ENCODE measurements at regions of chr12 and their contacts with region 1.

Region 1: GRCh38 chr12:92987362-92987761 is 58.3 kb upstream of the EEA1 start:
- DNase-seq: peak in 1 of 2 donors; percentile 87
- H3K4me3 ChIP-seq: no peak overlapping the region
- H3K27ac ChIP-seq: peak overlapping the region in 3 of 5 donors; percentile 58 to 75 (median 67)
- H3K4me1 ChIP-seq: peaks cover 5 to 25% (median 16%) of the 10 kb centered on the region in 4 donors
- H3K27me3 ChIP-seq: no peaks in the 10 kb centered on the region
- CTCF ChIP-seq: peak in 5 of 7 experiments; percentile 31 to 74 (median 60)
- EP300 ChIP-seq: no peak
- POLR2A ChIP-seq: no peak

Region 2: GRCh38 chr12:93390549-93391297 is 403.4 kb after region 1 on chr12:
- intact Hi-C with region 1: loop called (anchors 10 kb)
- DNase-seq: no peak
- H3K4me3 ChIP-seq: no peak overlapping the region
- H3K27ac ChIP-seq: peak overlapping the region in 3 of 5 donors; percentile 1 to 54 (median 32)
- H3K4me1 ChIP-seq: peaks cover 0 to 76% (median 45%) of the 10 kb centered on the region in 4 donors
- H3K27me3 ChIP-seq: no peaks in the 10 kb centered on the region
- CTCF ChIP-seq: no peak
- EP300 ChIP-seq: no peak
- POLR2A ChIP-seq: no peak